ENCODE measurements at regions of chr11 and their contacts with region 1.

Region 1: DNA sequence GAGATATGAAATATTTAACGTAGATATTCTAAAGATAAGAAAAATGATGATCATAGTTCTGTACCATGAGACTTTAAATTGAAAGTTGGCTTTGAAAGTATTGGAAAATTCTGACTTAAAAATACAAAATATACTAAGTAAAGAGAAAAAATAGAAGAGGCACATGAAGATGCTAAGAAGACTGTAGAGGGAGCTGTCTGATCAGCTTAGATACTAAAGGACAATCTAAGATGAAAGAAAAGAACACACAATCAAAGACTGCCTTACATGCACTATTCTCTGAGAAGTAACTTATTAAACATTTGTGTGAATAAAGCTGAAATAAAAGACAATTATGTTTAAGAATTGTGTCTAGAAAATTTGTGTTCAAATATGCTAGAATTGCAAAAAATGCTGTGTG is 55.1 kb downstream of the RBMXL2 start:
- DNase-seq: no peak
- ATAC-seq: no peak

Region 2: GRCh38 chr11:7032692-7033091 is 111.2 kb before region 1 on chr11:
- intact Hi-C with region 1: no loop called
- DNase-seq: no peak
- ATAC-seq: peak; percentile 58

Region 3: GRCh38 chr11:7442588-7443215 is 298.8 kb after region 1 on chr11:
- intact Hi-C with region 1: loop called in 1 of 2 experiments (anchors 10 kb)
- DNase-seq: peak; percentile 38 to 80
- ATAC-seq: peak; percentile 81